ENCODE measurements at regions of chrX and their contacts with region 1.

Region 1: GRCh38 chrX:47217642-47218279 is 720 bp upstream of the CDK16 start:
- DNase-seq: peak; percentile 86 to 90
- H3K4me3 ChIP-seq: peak overlapping the region; percentile 58; the same call in 1 of the 2 replicates
- H3K27ac ChIP-seq: peak overlapping the region; percentile 90
- H3K4me1 ChIP-seq: peaks cover 11% of the 10 kb centered on the region
- H3K27me3 ChIP-seq: no peaks in the 10 kb centered on the region
- CTCF ChIP-seq: no peak

Region 2: DNA sequence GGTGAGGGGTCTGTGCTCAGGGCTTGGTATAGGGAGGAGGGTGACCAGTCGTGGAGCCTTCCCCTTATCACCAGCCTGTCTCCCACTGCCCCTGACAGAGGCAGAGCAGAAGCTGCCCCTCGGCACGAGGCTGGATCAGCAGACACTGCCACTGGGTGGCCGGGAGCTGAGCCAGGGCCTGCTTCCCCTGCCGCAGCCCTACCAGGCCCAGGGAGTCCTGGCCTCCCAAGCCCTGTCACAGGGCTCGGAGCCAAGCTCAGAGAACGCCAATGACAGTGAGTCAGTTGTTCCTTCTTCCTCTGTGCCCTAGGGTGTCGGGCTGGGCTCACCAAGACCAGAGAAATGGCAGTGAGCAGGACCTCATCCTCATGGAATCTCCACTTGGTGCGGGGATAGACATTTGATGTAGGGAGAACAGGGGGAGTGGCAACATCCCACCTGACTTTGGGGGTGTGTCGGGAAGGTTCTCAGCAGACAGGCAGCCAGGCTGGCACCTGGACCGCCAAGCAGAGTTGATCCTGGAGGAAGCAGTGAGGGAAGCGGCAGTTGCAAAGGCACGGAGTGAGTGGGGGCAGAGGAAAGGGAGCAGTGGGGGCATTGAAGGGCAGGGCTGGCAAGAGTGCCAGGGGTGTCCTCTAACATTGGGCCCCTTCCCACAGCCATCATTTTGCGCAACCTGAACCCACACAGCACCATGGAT is 38.4 kb before region 1 on chrX:
- CTCF ChIA-PET with region 1: no interaction called
- POLR2A ChIA-PET with region 1: no interaction called
- intact Hi-C with region 1: no loop called
- DNase-seq: no peak
- H3K4me3 ChIP-seq: no peak overlapping the region
- H3K27ac ChIP-seq: no peak overlapping the region
- H3K4me1 ChIP-seq: no peaks in the 10 kb centered on the region
- H3K27me3 ChIP-seq: no peaks in the 10 kb centered on the region
- CTCF ChIP-seq: no peak

Region 3: GRCh38 chrX:47233337-47234113 is 15.8 kb after region 1 on chrX:
- CTCF ChIA-PET with region 1: no interaction called
- POLR2A ChIA-PET with region 1: no interaction called
- intact Hi-C with region 1: loop called (anchors 1 kb)
- DNase-seq: peak; percentile 83 to 85
- H3K4me3 ChIP-seq: peak overlapping the region; percentile 62
- H3K27ac ChIP-seq: peak overlapping the region; percentile 96
- H3K4me1 ChIP-seq: no peaks in the 10 kb centered on the region
- H3K27me3 ChIP-seq: no peaks in the 10 kb centered on the region
- CTCF ChIP-seq: no peak

Region 4: DNA sequence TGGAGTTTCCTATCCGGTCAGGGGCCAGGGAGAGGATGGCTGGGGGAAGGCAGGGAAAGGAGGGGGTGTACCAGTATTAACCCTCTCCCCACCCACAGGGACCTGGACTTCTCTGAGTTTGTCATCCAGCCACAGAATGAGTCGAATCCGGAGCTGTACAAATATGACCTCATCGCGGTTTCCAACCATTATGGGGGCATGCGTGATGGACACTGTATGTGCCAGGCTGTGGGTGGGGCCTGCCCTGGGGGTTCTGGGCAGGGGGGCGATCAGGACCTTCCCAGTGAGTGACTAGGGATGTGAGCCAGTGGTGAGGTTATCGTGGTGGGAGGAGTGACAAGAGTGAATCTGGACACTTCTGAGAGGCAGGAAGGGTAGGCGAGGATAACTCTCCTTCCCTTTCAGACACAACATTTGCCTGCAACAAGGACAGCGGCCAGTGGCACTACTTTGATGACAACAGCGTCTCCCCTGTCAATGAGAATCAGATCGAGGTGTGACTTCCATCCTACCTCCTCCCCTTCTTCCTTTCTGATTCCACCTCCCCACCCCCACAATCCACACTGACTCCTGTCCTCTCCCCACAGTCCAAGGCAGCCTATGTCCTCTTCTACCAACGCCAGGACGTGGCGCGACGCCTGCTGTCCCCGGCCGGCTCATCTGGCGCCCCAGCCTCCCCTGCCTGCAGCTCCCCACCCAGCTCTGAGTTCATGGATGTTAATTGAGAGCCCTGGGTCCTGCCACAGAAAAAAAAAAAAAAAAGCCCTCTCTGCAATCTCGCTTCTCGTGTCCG is 29.6 kb after region 1 on chrX:
- CTCF ChIA-PET with region 1: no interaction called
- POLR2A ChIA-PET with region 1: no interaction called
- intact Hi-C with region 1: no loop called
- DNase-seq: no peak
- H3K4me3 ChIP-seq: no peak overlapping the region
- H3K27ac ChIP-seq: no peak overlapping the region
- H3K4me1 ChIP-seq: no peaks in the 10 kb centered on the region
- H3K27me3 ChIP-seq: no peaks in the 10 kb centered on the region
- CTCF ChIP-seq: no peak

Region 5: GRCh38 chrX:47297871-47298270 is 80.1 kb after region 1 on chrX:
- CTCF ChIA-PET with region 1: no interaction called
- POLR2A ChIA-PET with region 1: interaction called, 5 read pairs
- intact Hi-C with region 1: loop called (anchors 5 kb)
- DNase-seq: peak; percentile 62 to 80
- H3K4me3 ChIP-seq: no peak overlapping the region
- H3K27ac ChIP-seq: peak overlapping the region; percentile 94
- H3K4me1 ChIP-seq: peaks cover 22% of the 10 kb centered on the region
- H3K27me3 ChIP-seq: no peaks in the 10 kb centered on the region
- CTCF ChIP-seq: no peak

Region 6: DNA sequence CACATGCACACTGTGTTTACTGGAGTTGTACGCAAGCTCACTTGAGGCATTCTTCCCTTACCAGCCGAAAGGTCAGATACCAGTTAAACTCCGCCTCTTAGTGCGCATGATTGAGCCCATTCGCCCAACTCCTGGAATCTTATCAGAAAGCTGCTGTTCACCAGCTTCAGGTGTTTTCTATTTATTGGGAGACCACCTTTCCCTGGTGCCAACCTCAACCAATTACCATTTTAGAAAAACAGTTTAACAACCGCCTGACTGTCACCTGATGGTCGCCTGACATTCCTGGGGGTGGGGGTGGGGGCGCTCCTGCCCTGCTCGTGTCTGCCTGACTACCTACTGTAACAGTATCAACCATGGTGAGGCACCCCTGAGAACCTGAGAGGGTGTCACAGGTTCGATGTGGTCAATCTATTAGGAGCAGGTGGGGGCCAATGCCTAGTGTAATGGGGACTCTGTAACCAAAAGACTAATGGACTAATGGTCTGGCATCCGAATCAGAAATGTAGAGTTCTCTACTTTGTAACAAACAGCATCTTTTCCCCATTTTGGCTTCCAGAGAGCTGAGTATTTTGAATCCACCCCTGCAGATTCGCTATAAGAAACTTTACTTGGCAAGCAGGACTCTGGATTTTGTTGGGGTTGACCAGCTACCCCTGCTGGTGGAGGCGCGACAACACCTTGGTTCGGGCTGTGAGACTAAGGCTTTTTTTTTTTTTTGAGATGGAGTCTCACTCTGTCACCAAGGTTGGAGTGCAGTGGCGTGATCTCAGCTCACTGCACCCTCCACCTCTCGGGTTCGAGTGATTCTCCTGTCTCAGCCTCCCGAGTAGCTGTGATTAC is 94.4 kb after region 1 on chrX:
- CTCF ChIA-PET with region 1: no interaction called
- POLR2A ChIA-PET with region 1: no interaction called
- intact Hi-C with region 1: loop called (anchors 5 kb)
- DNase-seq: peak; percentile 40 to 45
- H3K4me3 ChIP-seq: no peak overlapping the region
- H3K27ac ChIP-seq: no peak overlapping the region
- H3K4me1 ChIP-seq: no peaks in the 10 kb centered on the region
- H3K27me3 ChIP-seq: no peaks in the 10 kb centered on the region
- CTCF ChIP-seq: peak; percentile 59

Region 7: GRCh38 chrX:47361538-47362511 is 144.1 kb after region 1 on chrX:
- CTCF ChIA-PET with region 1: no interaction called
- POLR2A ChIA-PET with region 1: interaction called, 4 read pairs
- intact Hi-C with region 1: loop called (anchors 5 kb)
- DNase-seq: peak in 1 of 2 experiments; percentile 59
- H3K4me3 ChIP-seq: no peak overlapping the region
- H3K27ac ChIP-seq: no peak overlapping the region
- H3K4me1 ChIP-seq: no peaks in the 10 kb centered on the region
- H3K27me3 ChIP-seq: no peaks in the 10 kb centered on the region
- CTCF ChIP-seq: no peak

Measured in PC-9 (cell line).